ENCODE measurements at regions of chr17 and their contacts with region 1.

Region 1: DNA sequence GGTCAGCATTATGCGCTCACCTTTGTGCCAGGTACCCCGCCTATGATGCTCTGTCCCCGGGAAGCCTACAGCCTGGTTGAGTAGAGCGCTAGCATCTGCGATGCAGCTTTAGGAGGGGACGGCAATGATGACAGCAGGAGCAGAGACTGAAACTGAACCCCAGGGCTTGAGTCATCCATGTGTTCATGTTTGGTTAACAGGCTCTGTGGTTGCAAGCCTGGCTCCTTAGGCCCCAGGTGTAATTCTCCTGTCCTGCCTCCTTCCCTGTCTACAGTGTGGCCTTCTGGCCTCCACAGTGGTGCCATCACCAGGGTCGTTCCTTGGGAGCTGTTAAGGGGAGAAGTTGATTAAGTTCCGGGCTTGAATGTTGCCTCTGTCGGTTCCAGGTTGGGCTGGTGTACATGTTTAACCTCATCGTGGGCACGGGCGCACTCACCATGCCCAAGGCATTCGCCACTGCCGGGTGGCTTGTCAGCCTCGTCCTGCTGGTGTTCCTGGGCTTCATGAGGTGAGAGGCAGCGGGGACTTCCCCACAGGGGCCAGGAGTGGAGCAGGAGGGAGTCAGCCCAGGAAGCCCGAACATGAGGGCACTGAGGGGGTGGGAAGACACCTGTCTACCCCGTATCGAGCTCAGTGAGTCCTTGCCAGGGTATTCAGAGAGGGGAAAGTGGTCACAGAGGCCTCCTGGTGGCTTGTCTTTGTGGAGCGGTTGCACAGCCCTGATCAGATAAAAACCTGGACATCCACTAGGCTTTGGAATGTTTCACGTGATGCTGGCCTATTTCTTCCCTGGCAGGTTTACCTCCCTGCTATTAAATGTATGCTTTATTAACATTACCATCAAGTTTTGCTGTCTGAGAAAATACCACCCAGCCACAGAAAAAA is 9.2 kb upstream of the NAT9 start:
- DNase-seq: no peak
- ATAC-seq: peak; percentile 31
- H3K4me3 Mint-ChIP-seq: no peak overlapping the region
- H3K27ac Mint-ChIP-seq: peak overlapping the region; percentile 80
- H3K4me1 Mint-ChIP-seq: peaks cover 71% of the 10 kb centered on the region
- H3K27me3 Mint-ChIP-seq: no peaks in the 10 kb centered on the region

Region 2: GRCh38 chr17:74712756-74713155 is 72.6 kb before region 1 on chr17 and contains the start of gene CD300LF:
- CTCF ChIA-PET with region 1: no interaction called
- POLR2A ChIA-PET with region 1: no interaction called
- DNase-seq: no peak
- ATAC-seq: no peak
- H3K4me3 Mint-ChIP-seq: no peak within 1 kb of the TSS
- H3K27ac Mint-ChIP-seq: no peak within 1 kb of the TSS
- H3K4me1 Mint-ChIP-seq: no peaks in the 10 kb centered on the region
- H3K27me3 Mint-ChIP-seq: peaks cover 23% of the 10 kb centered on the region
- total RNA-seq, gene CD300LF: not detected

Region 3: GRCh38 chr17:74873038-74873873 is 87.9 kb after region 1 on chr17:
- CTCF ChIA-PET with region 1: interaction called, 294 read pairs
- POLR2A ChIA-PET with region 1: interaction called, 3 read pairs
- DNase-seq: peak; percentile 100
- ATAC-seq: peak; percentile 97
- H3K4me3 Mint-ChIP-seq: peak overlapping the region; percentile 82
- H3K27ac Mint-ChIP-seq: peak overlapping the region; percentile 83
- H3K4me1 Mint-ChIP-seq: peaks cover 33% of the 10 kb centered on the region
- H3K27me3 Mint-ChIP-seq: no peaks in the 10 kb centered on the region